Transverse colon (tissue), 4 donors: ENCODE measurements at regions of chr17 and their contacts with region 1.

Region 1: DNA sequence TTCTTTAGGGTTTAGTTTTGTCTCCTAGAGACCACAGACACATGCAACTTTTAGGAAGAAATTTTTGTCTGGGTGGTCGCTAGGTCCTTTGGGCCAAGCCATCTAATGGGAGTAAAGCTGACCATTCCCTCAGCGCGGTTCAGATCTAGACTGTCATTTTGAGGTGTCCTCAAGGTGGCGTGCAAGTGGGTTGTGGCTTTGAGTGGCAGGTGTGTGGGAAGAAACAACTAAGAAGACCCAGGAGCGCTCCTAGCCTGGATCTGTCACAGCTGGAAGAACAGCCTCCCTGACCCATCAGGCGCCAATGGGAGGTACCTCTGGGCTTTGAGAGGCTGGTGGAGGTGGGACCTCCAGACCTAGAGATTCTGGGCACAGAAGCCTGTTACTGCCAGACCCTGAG is 645.1 kb downstream of the KCNJ18 start:
- DNase-seq: no peak
- H3K4me3 ChIP-seq: no peak overlapping the region
- H3K27ac ChIP-seq: no peak overlapping the region
- H3K4me1 ChIP-seq: no peaks in the 10 kb centered on the region
- H3K27me3 ChIP-seq: no peaks in the 10 kb centered on the region
- CTCF ChIP-seq: no peak
- EP300 ChIP-seq: no peak
- POLR2A ChIP-seq: no peak

Region 2: DNA sequence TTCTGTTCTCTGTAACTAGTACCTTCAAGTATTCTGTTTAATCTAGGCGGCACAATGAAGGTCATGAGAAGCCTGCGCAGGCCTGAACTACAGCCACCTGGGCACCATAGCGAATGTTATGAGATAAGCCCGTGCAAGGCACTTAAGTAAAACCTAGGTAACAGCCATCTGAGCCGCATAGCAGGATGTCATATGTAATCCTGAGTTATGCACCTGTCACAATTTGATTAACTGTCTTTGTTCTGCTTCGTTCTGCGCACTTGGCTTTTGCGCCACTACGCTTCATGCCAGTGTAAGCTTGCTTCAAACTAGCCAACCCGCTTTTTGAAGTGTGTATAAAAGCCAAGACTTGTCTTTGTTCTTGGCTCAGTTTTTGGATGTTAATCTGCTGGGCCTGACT is 195.4 kb before region 1 on chr17:
- in situ Hi-C with region 1: no loop called
- intact Hi-C with region 1: no loop called
- DNase-seq: no peak
- H3K4me3 ChIP-seq: no peak overlapping the region
- H3K27ac ChIP-seq: no peak overlapping the region
- H3K4me1 ChIP-seq: no peaks in the 10 kb centered on the region
- H3K27me3 ChIP-seq: no peaks in the 10 kb centered on the region
- CTCF ChIP-seq: no peak
- EP300 ChIP-seq: no peak
- POLR2A ChIP-seq: no peak

Region 3: GRCh38 chr17:22202702-22203101 is 134.8 kb before region 1 on chr17:
- in situ Hi-C with region 1: loop called in 1 of 4 experiments (anchors 25 kb)
- intact Hi-C with region 1: no loop called
- DNase-seq: no peak
- H3K4me3 ChIP-seq: no peak overlapping the region
- H3K27ac ChIP-seq: no peak overlapping the region
- H3K4me1 ChIP-seq: no peaks in the 10 kb centered on the region
- H3K27me3 ChIP-seq: no peaks in the 10 kb centered on the region
- CTCF ChIP-seq: no peak
- EP300 ChIP-seq: no peak
- POLR2A ChIP-seq: no peak

Region 4: DNA sequence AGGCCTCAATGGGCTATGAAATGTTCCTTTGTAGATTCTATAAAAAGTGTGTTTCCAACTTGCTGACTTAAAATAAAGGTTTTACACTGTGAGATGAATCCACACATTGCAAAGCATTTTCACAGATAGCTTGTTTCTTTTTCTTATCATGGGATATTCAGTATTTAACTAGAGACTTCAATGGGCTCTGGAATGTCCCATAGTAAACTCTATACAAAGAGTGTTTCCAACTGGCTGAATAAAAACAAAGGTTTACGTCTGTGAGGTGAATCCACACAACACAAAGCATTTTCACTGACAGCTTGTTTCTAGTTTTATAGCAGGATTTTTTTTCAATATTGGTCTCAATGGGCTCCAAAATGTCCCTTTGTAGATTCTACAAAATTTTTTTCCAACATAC is 95.0 kb before region 1 on chr17:
- in situ Hi-C with region 1: no loop called
- intact Hi-C with region 1: no loop called
- DNase-seq: no peak
- H3K4me3 ChIP-seq: no peak overlapping the region
- H3K27ac ChIP-seq: no peak overlapping the region
- H3K4me1 ChIP-seq: no peaks in the 10 kb centered on the region
- H3K27me3 ChIP-seq: no peaks in the 10 kb centered on the region
- CTCF ChIP-seq: no peak
- EP300 ChIP-seq: no peak
- POLR2A ChIP-seq: no peak